CD4-positive, alpha-beta memory T cell (primary cell): ENCODE measurements at regions of chr3 and their contacts with region 1.

Region 1: GRCh38 chr3:184362668-184363540 is 1.4 kb downstream of the POLR2H start:
- DNase-seq: peak; percentile 91 to 94 (median 92)
- H3K4me3 ChIP-seq: peak overlapping the region; percentile 81 to 92
- H3K4me3 Mint-ChIP-seq: peak overlapping the region; percentile 97 to 100 (median 99)
- H3K27ac ChIP-seq: peak overlapping the region; percentile 75
- H3K27ac Mint-ChIP-seq: peak overlapping the region; percentile 97 to 99 (median 98)
- H3K4me1 ChIP-seq: peaks cover 22% of the 10 kb centered on the region
- H3K4me1 Mint-ChIP-seq: peaks cover 16 to 42% (median 29%) of the 10 kb centered on the region in 4 donors
- H3K27me3 ChIP-seq: no peaks in the 10 kb centered on the region
- H3K27me3 Mint-ChIP-seq: no peaks in the 10 kb centered on the region

Region 2: GRCh38 chr3:184185461-184186308 is 177.2 kb before region 1 on chr3 and contains the start of gene ABCF3:
- CTCF ChIA-PET with region 1: no interaction called
- POLR2A ChIA-PET with region 1: interaction called, 4 read pairs
- intact Hi-C with region 1: loop called (anchors 5 kb)
- DNase-seq: peak; percentile 98 to 100 (median 99)
- H3K4me3 ChIP-seq: peak within 1 kb of the TSS; percentile 87 to 98
- H3K4me3 Mint-ChIP-seq: peak within 1 kb of the TSS; percentile 98 to 99 (median 98)
- H3K27ac ChIP-seq: peak within 1 kb of the TSS; percentile 80
- H3K27ac Mint-ChIP-seq: peak within 1 kb of the TSS; percentile 92 to 99 (median 97)
- H3K4me1 ChIP-seq: peaks cover 30% of the 10 kb centered on the region
- H3K4me1 Mint-ChIP-seq: peaks cover 26 to 47% (median 36%) of the 10 kb centered on the region in 4 donors
- H3K27me3 ChIP-seq: no peaks in the 10 kb centered on the region
- H3K27me3 Mint-ChIP-seq: no peaks in the 10 kb centered on the region
- total RNA-seq, gene ABCF3: 122 to 124 TPM

Region 3: DNA sequence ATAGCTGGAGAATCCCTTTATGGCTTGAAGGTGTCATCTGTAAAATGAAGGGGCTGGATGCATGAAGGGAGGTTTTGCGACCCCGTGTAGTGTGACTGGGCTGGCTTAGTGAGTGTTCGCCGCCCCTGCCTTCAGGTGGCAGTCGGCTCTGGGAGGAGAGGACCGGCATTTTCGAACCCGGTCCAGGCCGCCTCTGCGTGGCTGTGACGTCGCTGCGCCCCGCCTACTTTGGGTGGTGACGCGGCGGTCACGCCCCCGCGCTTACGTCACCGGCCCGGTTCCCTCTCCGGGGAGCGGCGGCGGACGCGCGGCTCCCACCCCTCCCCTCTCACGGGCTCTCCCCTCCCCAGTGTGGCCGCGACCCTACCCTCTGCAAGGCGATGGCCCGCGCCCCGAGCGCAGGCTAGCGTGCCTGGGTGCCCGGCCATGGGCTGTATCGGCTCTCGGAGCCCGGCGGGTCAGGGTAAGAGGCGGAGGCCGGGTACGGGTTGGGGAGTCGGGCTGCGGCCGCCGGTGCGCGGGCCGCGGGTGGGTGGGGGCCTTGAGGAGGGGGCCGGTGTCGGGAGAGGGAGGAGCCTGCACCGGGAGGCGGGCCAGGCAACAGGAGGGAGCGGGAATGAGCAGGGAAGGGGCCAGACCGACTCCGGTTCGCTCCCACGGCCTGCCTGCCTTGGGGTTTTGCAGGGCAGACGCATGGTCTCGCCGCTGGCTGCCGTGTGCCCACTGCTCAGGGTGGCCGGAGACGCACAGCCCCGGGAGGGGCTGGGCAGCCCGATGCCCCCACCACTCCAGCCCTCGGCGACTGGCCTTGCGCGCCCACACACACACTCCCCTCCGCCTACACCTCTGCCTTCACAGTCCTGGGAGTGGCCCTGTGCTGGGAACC is 27.0 kb before region 1 on chr3:
- CTCF ChIA-PET with region 1: no interaction called
- POLR2A ChIA-PET with region 1: interaction called, 10 read pairs
- intact Hi-C with region 1: loop called (anchors 1 kb)
- DNase-seq: peak; percentile 84 to 89 (median 87)
- H3K4me3 ChIP-seq: peak overlapping the region; percentile 53 to 69
- H3K4me3 Mint-ChIP-seq: peak overlapping the region; percentile 87 to 92 (median 90)
- H3K27ac ChIP-seq: peak overlapping the region; percentile 92
- H3K27ac Mint-ChIP-seq: peak overlapping the region; percentile 94 to 99 (median 98)
- H3K4me1 ChIP-seq: peaks cover 20% of the 10 kb centered on the region
- H3K4me1 Mint-ChIP-seq: peaks cover 23 to 47% (median 30%) of the 10 kb centered on the region in 4 donors
- H3K27me3 ChIP-seq: no peaks in the 10 kb centered on the region
- H3K27me3 Mint-ChIP-seq: no peaks in the 10 kb centered on the region

Region 4: DNA sequence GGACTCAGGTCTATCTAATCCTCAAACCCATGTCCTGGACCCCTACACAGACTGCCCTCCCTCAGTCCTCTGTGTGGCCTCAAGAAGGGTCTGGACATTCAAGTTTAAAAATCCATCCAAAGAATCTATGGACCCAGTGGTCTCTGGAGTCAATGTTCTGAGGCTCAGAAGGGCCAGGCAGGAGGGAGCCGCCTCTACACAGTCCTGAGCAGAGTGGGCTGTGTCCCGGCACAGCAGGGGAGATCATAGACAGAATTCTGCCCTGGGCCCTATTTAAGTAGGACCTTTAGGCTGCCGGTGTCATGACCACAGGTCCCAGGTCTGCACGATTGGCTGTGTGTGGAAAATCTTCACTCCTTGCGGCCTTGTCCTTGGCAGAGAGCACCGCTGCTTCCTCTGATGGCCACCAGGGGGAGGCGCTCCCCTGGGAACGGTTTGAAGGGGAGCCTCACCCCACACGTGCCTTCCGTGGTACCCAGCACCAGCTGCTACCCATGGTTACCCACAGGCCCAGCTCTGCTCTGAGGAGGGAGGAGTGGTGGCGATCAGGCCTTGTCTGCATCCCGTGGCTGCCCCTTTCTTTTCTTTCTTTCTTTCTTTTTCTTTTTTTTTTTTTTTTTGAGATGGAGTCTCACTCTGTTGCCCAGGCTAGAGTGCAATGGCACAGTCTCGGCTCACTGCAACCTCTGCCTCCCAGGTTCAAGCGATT is 54.9 kb after region 1 on chr3:
- CTCF ChIA-PET with region 1: interaction called, 3 read pairs
- POLR2A ChIA-PET with region 1: no interaction called
- intact Hi-C with region 1: loop called (anchors 5 kb)
- DNase-seq: peak; percentile 60 to 67 (median 61)
- H3K4me3 ChIP-seq: no peak overlapping the region
- H3K4me3 Mint-ChIP-seq: peak overlapping the region in 1 of 8 donors; percentile 20
- H3K27ac ChIP-seq: no peak overlapping the region
- H3K27ac Mint-ChIP-seq: no peak overlapping the region
- H3K4me1 ChIP-seq: no peaks in the 10 kb centered on the region
- H3K4me1 Mint-ChIP-seq: peaks cover 0 to 2% (median 0%) of the 10 kb centered on the region in 4 donors
- H3K27me3 ChIP-seq: no peaks in the 10 kb centered on the region
- H3K27me3 Mint-ChIP-seq: peaks cover 0 to under 1% of the 10 kb centered on the region in 2 donors

Region 5: GRCh38 chr3:184811999-184812661 is 449.2 kb after region 1 on chr3 and contains the start of gene VPS8:
- CTCF ChIA-PET with region 1: no interaction called
- POLR2A ChIA-PET with region 1: no interaction called
- intact Hi-C with region 1: loop called (anchors 5 kb)
- DNase-seq: peak; percentile 96 to 97 (median 96)
- H3K4me3 ChIP-seq: peak within 1 kb of the TSS; percentile 83 to 88
- H3K4me3 Mint-ChIP-seq: peak within 1 kb of the TSS; percentile 96 to 99 (median 98)
- H3K27ac ChIP-seq: peak within 1 kb of the TSS; percentile 79
- H3K27ac Mint-ChIP-seq: peak within 1 kb of the TSS; percentile 93 to 99 (median 97)
- H3K4me1 ChIP-seq: peaks cover 46% of the 10 kb centered on the region
- H3K4me1 Mint-ChIP-seq: peaks cover 31 to 54% (median 44%) of the 10 kb centered on the region in 4 donors
- H3K27me3 ChIP-seq: no peaks in the 10 kb centered on the region
- H3K27me3 Mint-ChIP-seq: peaks cover 4 to 5% of the 10 kb centered on the region in 2 donors
- total RNA-seq, gene VPS8: 83.9 to 85.9 TPM